ENCODE measurements at regions of chr1 and their contacts with region 1.

Region 1: GRCh38 chr1:61210435-61211154 is 128.2 kb downstream of the NFIA start:
- DNase-seq: peak in 3 of 14 experiments; percentile 19 to 26 (median 22)
- ATAC-seq: no peak
- H3K4me3 ChIP-seq: no peak overlapping the region
- H3K4me3 Mint-ChIP-seq: no peak overlapping the region
- H3K27ac ChIP-seq: no peak overlapping the region
- H3K27ac Mint-ChIP-seq: no peak overlapping the region
- H3K4me1 ChIP-seq: no peaks in the 10 kb centered on the region
- H3K4me1 Mint-ChIP-seq: no peaks in the 10 kb centered on the region
- H3K27me3 ChIP-seq: no peaks in the 10 kb centered on the region
- H3K27me3 Mint-ChIP-seq: no peaks in the 10 kb centered on the region
- CTCF ChIP-seq: peak; percentile 20

Region 2: GRCh38 chr1:60984062-60984799 is 226.4 kb before region 1 on chr1:
- CTCF ChIA-PET with region 1: no interaction called
- POLR2A ChIA-PET with region 1: no interaction called
- intact Hi-C with region 1: loop called in 1 of 2 experiments (anchors 5 kb)
- DNase-seq: no peak
- ATAC-seq: no peak
- H3K4me3 ChIP-seq: no peak overlapping the region
- H3K4me3 Mint-ChIP-seq: no peak overlapping the region
- H3K27ac ChIP-seq: no peak overlapping the region
- H3K27ac Mint-ChIP-seq: no peak overlapping the region
- H3K4me1 ChIP-seq: no peaks in the 10 kb centered on the region
- H3K4me1 Mint-ChIP-seq: no peaks in the 10 kb centered on the region
- H3K27me3 ChIP-seq: no peaks in the 10 kb centered on the region
- H3K27me3 Mint-ChIP-seq: no peaks in the 10 kb centered on the region
- CTCF ChIP-seq: no peak

Region 3: GRCh38 chr1:61013946-61014667 is 196.5 kb before region 1 on chr1:
- CTCF ChIA-PET with region 1: no interaction called
- POLR2A ChIA-PET with region 1: no interaction called
- intact Hi-C with region 1: no loop called
- DNase-seq: no peak
- ATAC-seq: no peak
- H3K4me3 ChIP-seq: no peak overlapping the region
- H3K4me3 Mint-ChIP-seq: no peak overlapping the region
- H3K27ac ChIP-seq: no peak overlapping the region
- H3K27ac Mint-ChIP-seq: no peak overlapping the region
- H3K4me1 ChIP-seq: no peaks in the 10 kb centered on the region
- H3K4me1 Mint-ChIP-seq: no peaks in the 10 kb centered on the region
- H3K27me3 ChIP-seq: peaks cover 0 to 4% of the 10 kb centered on the region in 2 experiments
- H3K27me3 Mint-ChIP-seq: peaks cover 41% of the 10 kb centered on the region
- CTCF ChIP-seq: no peak